Ovary (tissue), 10 donors: ENCODE measurements at regions of chr1 and their contacts with region 1.

Region 1: GRCh38 chr1:43529206-43529731 is 1.4 kb upstream of the PTPRF start:
- DNase-seq: peak; percentile 80 to 91 (median 90)
- H3K4me3 ChIP-seq: no peak overlapping the region
- H3K27ac ChIP-seq: no peak overlapping the region
- H3K4me1 ChIP-seq: peaks cover 5% of the 10 kb centered on the region
- H3K27me3 ChIP-seq: no peaks in the 10 kb centered on the region
- CTCF ChIP-seq: peak; percentile 90 to 94 (median 93)
- EP300 ChIP-seq: no peak
- POLR2A ChIP-seq: no peak

Region 2: GRCh38 chr1:43565600-43566360 is 36.5 kb after region 1 on chr1:
- intact Hi-C with region 1: loop called in 3 of 4 experiments (anchors 5 kb)
- DNase-seq: peak; percentile 71 to 81 (median 79)
- H3K4me3 ChIP-seq: peak overlapping the region; percentile 35
- H3K27ac ChIP-seq: peak overlapping the region in 1 of 2 donors; percentile 85
- H3K4me1 ChIP-seq: peaks cover 20% of the 10 kb centered on the region
- H3K27me3 ChIP-seq: no peaks in the 10 kb centered on the region
- CTCF ChIP-seq: no peak
- EP300 ChIP-seq: no peak
- POLR2A ChIP-seq: no peak

Region 3: DNA sequence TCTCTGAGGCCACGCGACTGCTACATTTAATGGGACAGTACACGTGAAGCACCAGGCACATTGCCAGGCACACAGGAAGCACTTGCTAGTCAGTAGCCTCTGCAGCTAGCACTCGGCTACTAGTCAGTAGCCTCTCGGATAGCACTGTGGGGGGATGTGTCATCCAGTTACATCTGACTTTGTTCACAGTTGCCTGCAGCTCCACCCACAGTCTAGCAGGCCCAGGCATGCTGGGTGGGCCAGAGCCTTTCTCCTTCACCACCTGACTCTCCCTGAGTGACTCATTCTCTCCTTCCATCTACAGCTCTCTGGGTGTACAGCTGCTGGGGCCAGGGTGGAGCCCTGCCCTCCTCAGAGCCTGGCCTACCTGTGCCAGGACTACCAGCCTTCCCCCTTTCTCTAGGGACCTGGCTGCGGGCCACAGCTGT is 52.9 kb after region 1 on chr1:
- intact Hi-C with region 1: no loop called
- DNase-seq: no peak
- H3K4me3 ChIP-seq: no peak overlapping the region
- H3K27ac ChIP-seq: no peak overlapping the region
- H3K4me1 ChIP-seq: no peaks in the 10 kb centered on the region
- H3K27me3 ChIP-seq: no peaks in the 10 kb centered on the region
- CTCF ChIP-seq: no peak
- EP300 ChIP-seq: no peak
- POLR2A ChIP-seq: no peak

Region 4: DNA sequence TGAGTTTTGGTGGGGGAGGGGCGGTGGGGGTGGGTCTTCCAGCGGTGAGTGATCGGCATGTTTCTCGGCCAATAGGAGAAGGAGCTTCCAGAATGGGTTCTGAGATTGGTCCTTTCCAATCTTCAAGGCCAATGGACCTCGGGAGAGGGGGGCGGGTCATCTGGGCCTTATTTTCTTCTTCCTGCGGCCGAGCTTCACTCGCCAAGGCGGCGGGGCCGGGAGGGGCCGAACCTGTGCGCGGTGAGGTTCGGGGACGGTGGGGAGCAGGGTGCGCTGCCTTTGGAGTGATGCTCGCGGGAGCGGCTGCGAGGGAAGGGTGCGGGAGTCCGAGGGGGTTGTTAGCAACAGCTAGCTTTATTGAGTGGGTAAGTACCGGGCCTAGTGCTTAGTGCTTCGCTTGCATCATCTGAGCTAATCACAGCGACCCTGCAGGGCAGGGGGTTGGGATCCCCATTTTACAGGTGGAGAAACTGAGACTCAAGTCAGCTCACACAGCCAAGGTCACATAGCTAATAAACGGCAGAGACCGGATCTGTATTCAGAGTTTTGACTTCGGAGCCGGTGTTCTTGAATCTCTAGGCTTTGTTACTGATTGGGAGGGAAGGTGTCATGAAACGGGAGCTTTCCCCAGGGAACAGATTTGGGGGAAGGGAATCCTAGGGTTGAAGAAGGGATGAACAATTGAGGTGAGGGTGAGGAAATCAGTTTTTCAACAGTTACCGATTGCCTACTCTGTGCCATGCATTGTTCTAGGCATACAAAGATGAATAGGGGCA is 121.2 kb after region 1 on chr1:
- intact Hi-C with region 1: loop called in 3 of 4 experiments (anchors 2 to 10 kb)
- DNase-seq: peak; percentile 93 to 98 (median 95)
- H3K4me3 ChIP-seq: peak overlapping the region; percentile 89
- H3K27ac ChIP-seq: peak overlapping the region; percentile 53 to 89
- H3K4me1 ChIP-seq: no peaks in the 10 kb centered on the region
- H3K27me3 ChIP-seq: no peaks in the 10 kb centered on the region
- CTCF ChIP-seq: no peak
- EP300 ChIP-seq: no peak
- POLR2A ChIP-seq: peak; percentile 54

Region 5: GRCh38 chr1:43706598-43707495 is 177.6 kb after region 1 on chr1:
- intact Hi-C with region 1: loop called in 2 of 4 experiments (anchors 5 to 10 kb)
- DNase-seq: peak; percentile 86 to 93 (median 88)
- H3K4me3 ChIP-seq: peak overlapping the region; percentile 82
- H3K27ac ChIP-seq: peak overlapping the region; percentile 22 to 74
- H3K4me1 ChIP-seq: peaks cover 3% of the 10 kb centered on the region
- H3K27me3 ChIP-seq: no peaks in the 10 kb centered on the region
- CTCF ChIP-seq: no peak
- EP300 ChIP-seq: no peak
- POLR2A ChIP-seq: no peak

Region 6: DNA sequence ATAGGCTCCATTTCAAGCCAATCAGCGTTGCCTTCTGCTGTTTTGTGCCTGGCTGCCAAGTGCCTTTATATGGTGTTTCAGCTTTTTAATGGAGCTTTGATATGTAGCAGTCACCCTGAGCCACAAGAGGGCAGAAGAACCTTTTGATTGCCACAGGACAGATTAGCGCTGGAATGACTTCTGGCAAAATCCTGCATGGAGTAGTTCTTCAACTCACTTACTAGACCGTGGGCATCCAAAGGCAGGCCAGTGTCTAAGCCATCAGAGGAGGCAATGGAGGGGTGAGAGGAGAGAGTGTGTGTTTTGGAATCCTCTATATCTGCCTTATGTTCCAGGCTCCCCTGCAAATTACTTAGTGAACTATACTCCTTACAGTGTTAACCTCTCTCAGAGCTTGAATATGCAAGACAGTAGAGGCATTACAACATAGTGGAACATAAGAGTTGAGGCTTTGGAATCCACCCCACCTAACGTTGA is 234.3 kb after region 1 on chr1:
- intact Hi-C with region 1: loop called in 2 of 4 experiments (anchors 5 to 10 kb)
- DNase-seq: peak; percentile 54 to 81 (median 64)
- H3K4me3 ChIP-seq: no peak overlapping the region
- H3K27ac ChIP-seq: no peak overlapping the region
- H3K4me1 ChIP-seq: peaks cover 2% of the 10 kb centered on the region
- H3K27me3 ChIP-seq: no peaks in the 10 kb centered on the region
- CTCF ChIP-seq: peak; percentile 61 to 83 (median 80)
- EP300 ChIP-seq: no peak
- POLR2A ChIP-seq: no peak

Region 7: GRCh38 chr1:44049839-44050238 is 520.6 kb after region 1 on chr1:
- intact Hi-C with region 1: loop called in 1 of 4 experiments (anchors 5 kb)
- DNase-seq: no peak
- H3K4me3 ChIP-seq: no peak overlapping the region
- H3K27ac ChIP-seq: no peak overlapping the region
- H3K4me1 ChIP-seq: no peaks in the 10 kb centered on the region
- H3K27me3 ChIP-seq: no peaks in the 10 kb centered on the region
- CTCF ChIP-seq: no peak
- EP300 ChIP-seq: no peak
- POLR2A ChIP-seq: no peak